Left ventricle myocardium inferior (tissue), 1 donor: ENCODE measurements at regions of chr7 and their contacts with region 1.

Region 1: GRCh38 chr7:100726996-100727761 is 6.2 kb upstream of the ZAN start:
- DNase-seq: no peak
- H3K4me3 ChIP-seq: no peak overlapping the region
- H3K27ac ChIP-seq: no peak overlapping the region
- H3K4me1 ChIP-seq: no peaks in the 10 kb centered on the region
- H3K27me3 ChIP-seq: peaks cover 87% of the 10 kb centered on the region
- CTCF ChIP-seq: no peak

Region 2: DNA sequence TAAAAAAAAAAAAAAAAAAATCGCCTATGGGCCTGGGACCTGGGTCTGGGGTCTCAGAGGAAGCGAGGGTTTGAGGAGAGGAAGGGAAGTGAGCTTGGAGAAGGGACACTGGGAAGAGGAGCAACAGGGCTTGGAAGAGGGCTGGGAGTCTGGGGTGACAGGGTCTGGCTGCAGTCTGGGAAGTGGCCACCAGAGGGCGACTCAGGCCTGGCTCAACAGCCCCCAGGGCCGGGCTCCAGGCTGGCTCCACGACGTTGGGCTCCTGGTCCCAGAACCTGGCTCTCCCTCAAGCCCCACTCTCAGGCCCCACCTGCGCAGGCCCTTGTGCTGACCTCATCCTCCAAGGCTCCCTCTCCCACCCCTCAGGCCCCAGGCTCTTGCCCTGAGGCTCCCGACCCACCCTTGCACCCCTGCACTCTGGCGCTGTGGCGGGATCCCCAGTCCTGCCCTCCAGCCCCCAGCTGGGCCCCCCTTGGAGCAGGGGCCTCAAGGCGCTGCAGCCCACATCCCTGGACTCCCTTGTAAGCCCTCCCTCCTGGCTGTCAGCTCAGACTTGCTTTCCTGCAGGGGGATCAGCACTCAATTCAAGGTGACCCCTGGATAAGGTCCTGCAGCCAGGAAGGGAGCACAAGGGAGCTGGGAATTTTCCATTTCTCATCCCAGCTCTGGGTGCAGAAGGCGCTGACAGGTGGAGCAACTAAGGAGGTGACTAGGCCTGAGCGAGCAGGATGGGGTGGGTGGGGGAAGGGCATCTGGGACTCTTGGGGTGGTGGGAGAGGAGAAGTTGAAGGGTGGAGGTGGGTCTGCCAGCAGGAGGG is 257.7 kb before region 1 on chr7:
- intact Hi-C with region 1: loop called (anchors 5 kb)
- DNase-seq: peak; percentile 89
- H3K4me3 ChIP-seq: no peak overlapping the region
- H3K27ac ChIP-seq: peak overlapping the region; percentile 80
- H3K4me1 ChIP-seq: peaks cover 91% of the 10 kb centered on the region
- H3K27me3 ChIP-seq: no peaks in the 10 kb centered on the region
- CTCF ChIP-seq: peak; percentile 96

Region 3: GRCh38 chr7:100933735-100934134 is 206.6 kb after region 1 on chr7:
- intact Hi-C with region 1: no loop called
- DNase-seq: no peak
- H3K4me3 ChIP-seq: no peak overlapping the region
- H3K27ac ChIP-seq: no peak overlapping the region
- H3K4me1 ChIP-seq: peaks cover 6% of the 10 kb centered on the region
- H3K27me3 ChIP-seq: peaks cover 5% of the 10 kb centered on the region
- CTCF ChIP-seq: no peak